AG04450 (cell line): ENCODE measurements at regions of chr5 and their contacts with region 1.

Region 1: GRCh38 chr5:128674825-128675446 is 136.9 kb upstream of the FBN2 start:
- DNase-seq: peak; percentile 24
- H3K4me3 ChIP-seq: no peak overlapping the region
- H3K27ac ChIP-seq: no peak overlapping the region
- H3K27me3 ChIP-seq: no peaks in the 10 kb centered on the region
- CTCF ChIP-seq: peak; percentile 85

Region 2: DNA sequence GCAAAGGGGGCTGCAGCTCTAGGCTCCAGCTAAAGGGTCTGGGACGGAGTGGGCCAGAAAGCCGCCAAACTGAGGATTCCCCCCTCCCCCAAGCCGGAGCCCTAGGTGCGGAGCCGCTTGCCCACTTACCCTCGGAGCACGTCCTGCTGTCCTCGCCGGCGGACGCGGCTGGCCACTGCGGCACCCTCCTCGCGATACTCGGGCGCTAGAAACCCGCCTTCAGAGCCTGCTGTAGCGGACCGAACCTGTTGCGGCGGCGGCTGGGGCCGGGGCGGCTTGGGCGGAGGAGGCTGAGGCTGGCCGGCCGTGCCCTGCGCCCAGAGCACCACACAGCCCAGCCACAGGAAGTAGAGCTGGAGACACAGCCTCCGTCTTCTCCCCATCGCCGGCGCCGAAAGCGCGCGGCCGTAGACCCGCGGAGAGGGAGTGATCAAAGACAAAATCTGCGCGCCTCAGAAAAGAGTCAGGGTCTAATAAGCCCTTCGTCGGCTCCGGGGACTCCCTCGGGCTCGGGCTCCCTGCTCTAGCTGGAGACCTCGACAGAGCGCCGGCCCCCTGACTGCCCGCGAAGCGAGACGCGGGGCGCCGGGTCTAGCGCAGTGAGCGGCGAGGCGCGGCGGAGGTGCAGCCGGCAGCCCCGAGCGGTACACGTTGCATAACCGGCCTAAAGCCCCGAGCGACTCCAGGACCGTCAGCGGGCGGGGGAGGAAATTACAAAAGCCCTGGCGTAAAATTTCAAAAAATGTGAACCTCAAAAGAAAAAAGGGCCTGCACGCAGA is 137.5 kb before region 1 on chr5:
- CTCF ChIA-PET with region 1: interaction called, 14 read pairs
- POLR2A ChIA-PET with region 1: interaction called, 3 read pairs
- DNase-seq: no peak
- H3K4me3 ChIP-seq: peak overlapping the region; percentile 70
- H3K27ac ChIP-seq: peak overlapping the region; percentile 24
- H3K27me3 ChIP-seq: peaks cover 15% of the 10 kb centered on the region
- CTCF ChIP-seq: no peak

Region 3: GRCh38 chr5:128579669-128580068 is 95.3 kb before region 1 on chr5:
- CTCF ChIA-PET with region 1: no interaction called
- POLR2A ChIA-PET with region 1: no interaction called
- DNase-seq: no peak
- H3K4me3 ChIP-seq: no peak overlapping the region
- H3K27ac ChIP-seq: no peak overlapping the region
- H3K27me3 ChIP-seq: no peaks in the 10 kb centered on the region
- CTCF ChIP-seq: no peak

Region 4: DNA sequence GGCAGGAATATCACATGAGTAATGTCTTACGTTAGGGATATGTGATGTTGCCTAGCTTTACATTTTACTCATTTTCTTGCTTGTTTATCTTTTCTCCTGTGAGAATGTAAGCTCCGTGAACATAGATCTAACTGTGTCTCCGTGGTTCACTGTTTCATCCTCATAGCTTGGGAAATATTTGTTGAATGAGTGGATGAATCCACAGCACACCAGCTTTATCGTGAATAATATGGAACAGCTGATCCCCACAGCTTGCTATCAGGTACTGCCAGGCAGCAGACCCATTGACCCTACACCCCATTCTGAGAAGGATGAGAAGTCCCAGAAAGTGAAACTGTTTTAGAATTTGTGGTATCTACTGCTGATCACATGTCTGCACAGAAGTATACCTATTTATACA is 30.1 kb before region 1 on chr5:
- CTCF ChIA-PET with region 1: interaction called, 11 read pairs
- POLR2A ChIA-PET with region 1: no interaction called
- DNase-seq: peak; percentile 63
- H3K4me3 ChIP-seq: peak overlapping the region; percentile 31
- H3K27ac ChIP-seq: no peak overlapping the region
- H3K27me3 ChIP-seq: no peaks in the 10 kb centered on the region
- CTCF ChIP-seq: no peak

Region 5: DNA sequence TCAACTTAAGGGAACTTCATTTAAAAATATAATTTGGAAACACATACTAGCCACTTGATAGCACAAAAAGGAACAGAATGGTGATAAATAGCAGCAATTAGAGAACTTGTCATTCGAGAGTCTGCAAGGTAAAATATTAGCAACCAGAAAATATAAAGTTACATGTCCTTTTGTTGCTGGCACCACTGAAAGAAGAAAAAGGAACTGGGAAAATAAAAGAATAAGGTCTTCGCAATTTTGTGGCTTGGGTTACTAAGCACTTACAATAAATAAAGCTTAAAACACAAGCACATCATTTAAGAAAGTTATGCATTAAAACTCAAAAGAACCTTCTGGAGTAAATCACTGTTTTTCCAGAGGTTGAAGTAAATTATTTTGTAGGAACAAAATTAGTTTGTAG is 13.0 kb after region 1 on chr5:
- CTCF ChIA-PET with region 1: interaction called, 14 read pairs
- POLR2A ChIA-PET with region 1: no interaction called
- DNase-seq: no peak
- H3K4me3 ChIP-seq: no peak overlapping the region
- H3K27ac ChIP-seq: no peak overlapping the region
- H3K27me3 ChIP-seq: no peaks in the 10 kb centered on the region
- CTCF ChIP-seq: no peak